Activated CD4-positive, alpha-beta memory T cell treated with anti-CD3 and anti-CD28 coated beads, Interleukin-2, amount 10 ng/mL, durations not matched to agents 7 days and 5 days (primary cell): ENCODE measurements at regions of chr12 and their contacts with region 1.

Region 1: DNA sequence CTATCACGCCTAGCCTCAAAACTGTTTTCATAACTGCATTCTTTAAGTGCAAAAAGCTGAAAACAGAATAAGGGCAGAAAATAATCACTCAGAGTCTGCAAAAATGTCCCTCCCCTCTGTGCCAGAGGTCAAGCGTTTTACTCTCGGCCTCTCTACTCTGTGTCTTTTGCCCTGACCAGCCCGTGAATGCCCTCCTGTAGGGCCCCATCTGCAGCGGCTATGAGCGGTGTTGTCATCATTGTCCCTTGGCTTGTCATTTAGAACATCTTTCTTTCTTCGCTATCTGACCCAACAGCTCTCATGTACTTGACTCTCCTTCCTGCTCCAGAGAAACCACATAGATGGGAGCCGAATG is 21.7 kb downstream of the ELK3 start:
- DNase-seq: no peak
- H3K4me3 Mint-ChIP-seq: no peak overlapping the region
- H3K27ac Mint-ChIP-seq: no peak overlapping the region
- H3K4me1 Mint-ChIP-seq: peaks cover 51% of the 10 kb centered on the region
- H3K27me3 Mint-ChIP-seq: no peaks in the 10 kb centered on the region

Region 2: DNA sequence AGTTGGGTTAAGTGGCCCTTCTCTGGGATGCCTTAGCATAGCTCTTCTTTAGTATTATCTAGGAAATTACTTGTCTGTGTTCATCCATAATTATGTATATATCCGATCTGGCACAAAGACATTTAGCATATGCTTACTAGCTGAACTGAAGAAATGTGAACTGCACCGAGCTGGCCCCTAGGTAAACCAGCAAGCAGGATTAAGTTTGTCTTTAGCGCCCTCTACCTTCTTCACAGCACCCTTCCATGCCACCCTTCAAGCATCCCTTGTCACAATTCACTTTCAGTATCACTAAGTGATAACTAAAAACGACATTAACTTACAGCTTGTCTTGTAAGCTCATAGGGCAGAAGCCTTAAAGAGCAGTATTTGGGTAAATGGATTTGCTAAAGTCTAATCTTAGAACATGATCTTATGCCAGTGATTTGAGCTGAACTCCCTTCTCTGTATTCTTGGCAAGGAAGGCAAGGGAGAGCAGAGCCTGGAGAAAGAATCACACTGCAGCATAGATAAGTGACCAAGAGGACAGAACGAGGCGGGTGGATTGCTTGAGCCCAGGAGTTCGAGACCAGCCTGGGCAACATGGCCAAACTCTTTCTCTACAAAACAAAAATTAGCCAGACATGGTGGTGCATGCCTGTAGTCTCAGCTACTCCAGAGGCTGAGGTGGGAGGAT is 217.1 kb before region 1 on chr12:
- CTCF ChIA-PET with region 1: interaction called, 21 read pairs
- POLR2A ChIA-PET with region 1: no interaction called
- DNase-seq: peak; percentile 64
- H3K4me3 Mint-ChIP-seq: no peak overlapping the region
- H3K27ac Mint-ChIP-seq: no peak overlapping the region
- H3K4me1 Mint-ChIP-seq: peaks cover 15% of the 10 kb centered on the region
- H3K27me3 Mint-ChIP-seq: no peaks in the 10 kb centered on the region

Region 3: DNA sequence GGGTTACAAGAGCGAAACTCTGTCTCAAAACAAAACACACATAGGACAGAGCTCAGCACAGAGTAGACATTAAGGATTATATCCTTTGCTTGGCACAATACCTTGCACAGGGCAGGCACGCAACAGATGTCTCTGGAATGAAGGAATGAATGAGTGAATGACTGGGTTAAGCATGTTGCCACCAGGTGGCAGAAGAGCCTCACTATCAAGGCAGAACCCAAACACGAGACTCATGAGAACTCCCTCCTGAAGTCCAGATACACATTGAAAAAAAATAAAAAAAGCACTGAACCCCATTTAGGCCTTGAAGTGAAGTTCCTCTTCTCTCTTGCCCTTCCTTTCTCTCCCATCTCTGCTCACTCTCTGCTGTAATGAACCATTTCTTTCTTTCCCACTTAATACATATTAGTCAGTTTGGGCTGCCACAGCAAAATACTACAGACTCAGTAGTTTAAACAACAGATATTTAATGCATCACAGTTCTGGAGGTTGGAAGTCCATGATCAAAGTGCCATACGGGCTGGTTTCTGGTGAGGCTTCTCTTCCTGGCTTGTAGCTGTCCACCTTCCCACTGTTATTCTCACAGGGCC is 153.9 kb before region 1 on chr12:
- CTCF ChIA-PET with region 1: interaction called, 115 read pairs
- POLR2A ChIA-PET with region 1: interaction called, 4 read pairs
- DNase-seq: peak; percentile 83
- H3K4me3 Mint-ChIP-seq: no peak overlapping the region
- H3K27ac Mint-ChIP-seq: no peak overlapping the region
- H3K4me1 Mint-ChIP-seq: peaks cover 26% of the 10 kb centered on the region
- H3K27me3 Mint-ChIP-seq: no peaks in the 10 kb centered on the region

Region 4: GRCh38 chr12:96177013-96177412 is 38.9 kb before region 1 on chr12:
- CTCF ChIA-PET with region 1: interaction called, 17 read pairs
- POLR2A ChIA-PET with region 1: interaction called, 66 read pairs
- DNase-seq: peak; percentile 84
- H3K4me3 Mint-ChIP-seq: peak overlapping the region; percentile 44
- H3K27ac Mint-ChIP-seq: peak overlapping the region; percentile 93
- H3K4me1 Mint-ChIP-seq: peaks cover 34% of the 10 kb centered on the region
- H3K27me3 Mint-ChIP-seq: no peaks in the 10 kb centered on the region

Region 5: GRCh38 chr12:96194971-96195844 is 20.7 kb before region 1 on chr12:
- CTCF ChIA-PET with region 1: interaction called, 21 read pairs
- POLR2A ChIA-PET with region 1: interaction called, 103 read pairs
- DNase-seq: peak; percentile 78
- H3K4me3 Mint-ChIP-seq: peak overlapping the region; percentile 99
- H3K27ac Mint-ChIP-seq: peak overlapping the region; percentile 99
- H3K4me1 Mint-ChIP-seq: peaks cover 47% of the 10 kb centered on the region
- H3K27me3 Mint-ChIP-seq: no peaks in the 10 kb centered on the region

Region 6: GRCh38 chr12:96201272-96202227 is 14.3 kb before region 1 on chr12:
- CTCF ChIA-PET with region 1: interaction called, 21 read pairs
- POLR2A ChIA-PET with region 1: interaction called, 103 read pairs
- DNase-seq: no peak
- H3K4me3 Mint-ChIP-seq: no peak overlapping the region
- H3K27ac Mint-ChIP-seq: no peak overlapping the region
- H3K4me1 Mint-ChIP-seq: peaks cover 74% of the 10 kb centered on the region
- H3K27me3 Mint-ChIP-seq: no peaks in the 10 kb centered on the region

Region 7: GRCh38 chr12:96237465-96238077 is 21.7 kb after region 1 on chr12:
- CTCF ChIA-PET with region 1: interaction called, 23 read pairs
- POLR2A ChIA-PET with region 1: interaction called, 5 read pairs
- DNase-seq: peak; percentile 68
- H3K4me3 Mint-ChIP-seq: peak overlapping the region; percentile 39
- H3K27ac Mint-ChIP-seq: peak overlapping the region; percentile 56
- H3K4me1 Mint-ChIP-seq: peaks cover 80% of the 10 kb centered on the region
- H3K27me3 Mint-ChIP-seq: no peaks in the 10 kb centered on the region

Region 8: DNA sequence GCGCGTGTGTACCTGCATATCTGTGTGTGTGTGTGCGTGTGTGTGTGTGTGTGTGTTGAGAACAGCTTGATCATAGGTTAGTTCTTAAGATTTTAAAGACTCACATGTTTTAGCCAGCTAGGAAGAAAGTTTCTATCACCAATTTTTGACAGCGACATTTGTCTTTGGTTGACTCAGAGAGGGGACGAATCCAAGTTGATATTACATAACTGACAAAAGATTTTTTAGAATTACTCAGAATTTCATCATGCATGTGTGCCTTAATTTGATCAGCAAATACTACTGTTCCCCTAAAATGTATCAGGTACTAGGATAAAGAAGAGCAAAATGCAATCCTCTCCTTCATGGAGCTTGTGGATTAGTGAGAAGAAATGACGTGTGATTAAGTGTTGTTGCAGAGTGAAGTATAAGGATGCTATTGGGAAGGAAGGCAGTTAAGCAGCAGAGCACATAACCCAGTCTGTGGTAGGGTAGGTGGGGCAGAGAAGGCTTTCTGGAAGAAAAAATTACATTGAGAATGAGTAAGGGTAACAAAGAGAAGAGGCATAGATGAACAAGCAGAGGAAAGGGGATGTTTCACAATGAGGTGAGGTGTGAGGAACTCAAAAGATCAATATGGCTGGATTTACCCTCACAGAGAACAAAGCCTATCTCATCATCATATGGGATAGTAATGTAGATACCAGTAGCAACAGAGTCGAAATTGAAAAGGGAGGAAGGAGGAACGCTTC is 55.7 kb after region 1 on chr12:
- CTCF ChIA-PET with region 1: no interaction called
- POLR2A ChIA-PET with region 1: no interaction called
- DNase-seq: no peak
- H3K4me3 Mint-ChIP-seq: no peak overlapping the region
- H3K27ac Mint-ChIP-seq: peak overlapping the region; percentile 31
- H3K4me1 Mint-ChIP-seq: peaks cover 10% of the 10 kb centered on the region
- H3K27me3 Mint-ChIP-seq: no peaks in the 10 kb centered on the region

Region 9: DNA sequence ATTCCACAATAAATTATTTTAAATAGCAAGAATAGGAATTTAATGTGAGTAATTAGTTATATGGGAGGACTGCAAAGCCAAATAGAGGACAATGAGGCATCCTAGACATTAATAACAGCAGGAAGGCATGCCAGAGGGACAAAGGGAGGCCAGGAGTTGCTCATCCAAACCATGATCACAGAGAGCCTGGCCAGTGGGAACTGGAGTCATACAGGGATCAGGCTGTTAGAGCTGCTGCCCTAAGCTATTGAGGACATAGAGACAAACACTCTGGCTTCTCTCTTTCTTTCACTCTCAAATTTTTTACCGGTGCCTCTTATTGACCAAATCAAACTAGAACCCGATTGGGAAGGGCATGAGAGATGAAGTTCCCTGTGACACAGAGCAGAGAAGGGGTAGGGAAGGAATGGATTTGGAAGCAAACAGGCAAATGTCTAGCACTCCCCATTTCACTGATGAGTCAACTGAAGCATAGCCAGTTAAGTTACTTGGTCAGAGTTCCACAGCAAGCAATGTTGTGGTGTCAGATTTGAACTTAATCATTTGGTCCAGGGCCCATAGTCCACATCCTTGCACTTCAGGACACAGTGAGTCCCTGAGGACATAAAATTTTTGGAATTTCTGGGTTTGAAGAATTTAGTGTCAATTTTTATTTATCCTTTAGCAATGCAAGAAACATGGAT is 255.6 kb after region 1 on chr12:
- CTCF ChIA-PET with region 1: no interaction called
- POLR2A ChIA-PET with region 1: no interaction called
- DNase-seq: no peak
- H3K4me3 Mint-ChIP-seq: no peak overlapping the region
- H3K27ac Mint-ChIP-seq: no peak overlapping the region
- H3K4me1 Mint-ChIP-seq: no peaks in the 10 kb centered on the region
- H3K27me3 Mint-ChIP-seq: peaks cover 7% of the 10 kb centered on the region